ENCODE measurements at regions of chr20 and their contacts with region 1.

Region 1: DNA sequence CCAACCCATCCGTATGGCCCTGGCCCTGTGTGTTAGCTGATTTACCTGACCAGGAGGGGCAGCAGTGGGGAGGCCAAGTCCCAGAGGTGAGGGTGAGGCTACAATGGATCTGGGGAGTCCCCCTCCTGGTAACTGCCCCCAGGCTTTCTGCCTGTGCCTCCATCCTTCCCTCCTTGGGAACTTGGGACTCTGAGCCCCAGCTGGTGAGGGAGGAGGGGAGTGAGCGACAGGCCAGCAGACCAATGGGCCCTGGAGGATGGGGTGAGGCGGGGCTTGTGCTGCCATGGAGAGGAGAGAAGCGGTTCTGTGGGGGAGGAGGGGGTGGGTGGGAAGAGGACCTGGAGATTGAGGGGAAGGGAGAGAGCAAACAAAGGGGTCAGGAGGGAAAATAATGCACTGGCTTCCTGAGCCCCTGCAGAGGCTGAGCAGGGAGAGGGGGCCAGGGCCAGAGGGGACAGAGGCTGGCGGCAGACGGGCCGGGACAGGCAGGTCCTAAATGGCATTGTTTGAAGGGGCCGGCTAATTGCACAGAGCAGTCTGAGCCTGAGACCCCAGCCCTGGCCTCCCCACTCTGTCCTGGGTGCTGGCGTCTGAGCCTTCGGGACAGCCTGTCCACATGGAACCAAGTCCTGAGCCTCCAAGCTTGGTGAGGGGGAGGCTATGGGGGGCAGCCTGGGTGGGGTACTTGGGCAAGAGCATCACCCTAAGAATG is 17.5 kb downstream of the DNMT3B start:
- DNase-seq: no peak
- H3K4me3 ChIP-seq: no peak overlapping the region
- H3K4me3 Mint-ChIP-seq: no peak overlapping the region
- H3K27ac ChIP-seq: no peak overlapping the region
- H3K27ac Mint-ChIP-seq: no peak overlapping the region
- H3K4me1 ChIP-seq: no peaks in the 10 kb centered on the region
- H3K4me1 Mint-ChIP-seq: no peaks in the 10 kb centered on the region
- H3K27me3 ChIP-seq: no peaks in the 10 kb centered on the region
- H3K27me3 Mint-ChIP-seq: peaks cover 0 to 3% of the 10 kb centered on the region in 2 donors

Region 2: GRCh38 chr20:32681175-32682084 is 98.2 kb before region 1 on chr20:
- CTCF ChIA-PET with region 1: interaction called, 225 read pairs
- POLR2A ChIA-PET with region 1: no interaction called
- DNase-seq: no peak
- H3K4me3 ChIP-seq: no peak overlapping the region
- H3K4me3 Mint-ChIP-seq: no peak overlapping the region
- H3K27ac ChIP-seq: peak overlapping the region; percentile 45
- H3K27ac Mint-ChIP-seq: peak overlapping the region in 1 of 8 donors; percentile 90
- H3K4me1 ChIP-seq: peaks cover 6% of the 10 kb centered on the region
- H3K4me1 Mint-ChIP-seq: peaks cover 5 to 10% (median 5%) of the 10 kb centered on the region in 3 donors
- H3K27me3 ChIP-seq: no peaks in the 10 kb centered on the region
- H3K27me3 Mint-ChIP-seq: peaks cover 0 to 1% of the 10 kb centered on the region in 2 donors

Region 3: GRCh38 chr20:32743237-32744112 is 36.2 kb before region 1 on chr20 and contains the start of gene COMMD7:
- CTCF ChIA-PET with region 1: interaction called, 15 read pairs
- POLR2A ChIA-PET with region 1: no interaction called
- DNase-seq: peak; percentile 35 to 70 (median 51)
- H3K4me3 ChIP-seq: peak within 1 kb of the TSS; percentile 62
- H3K4me3 Mint-ChIP-seq: peak within 1 kb of the TSS; percentile 85 to 98 (median 97)
- H3K27ac ChIP-seq: peak within 1 kb of the TSS; percentile 87
- H3K27ac Mint-ChIP-seq: peak within 1 kb of the TSS; percentile 84 to 99 (median 98)
- H3K4me1 ChIP-seq: peaks cover 31% of the 10 kb centered on the region
- H3K4me1 Mint-ChIP-seq: peaks cover 30 to 43% (median 39%) of the 10 kb centered on the region in 3 donors
- H3K27me3 ChIP-seq: no peaks in the 10 kb centered on the region
- H3K27me3 Mint-ChIP-seq: peaks cover 0 to 2% of the 10 kb centered on the region in 2 donors
- total RNA-seq, gene COMMD7: 33.8 to 35.6 TPM

Region 4: DNA sequence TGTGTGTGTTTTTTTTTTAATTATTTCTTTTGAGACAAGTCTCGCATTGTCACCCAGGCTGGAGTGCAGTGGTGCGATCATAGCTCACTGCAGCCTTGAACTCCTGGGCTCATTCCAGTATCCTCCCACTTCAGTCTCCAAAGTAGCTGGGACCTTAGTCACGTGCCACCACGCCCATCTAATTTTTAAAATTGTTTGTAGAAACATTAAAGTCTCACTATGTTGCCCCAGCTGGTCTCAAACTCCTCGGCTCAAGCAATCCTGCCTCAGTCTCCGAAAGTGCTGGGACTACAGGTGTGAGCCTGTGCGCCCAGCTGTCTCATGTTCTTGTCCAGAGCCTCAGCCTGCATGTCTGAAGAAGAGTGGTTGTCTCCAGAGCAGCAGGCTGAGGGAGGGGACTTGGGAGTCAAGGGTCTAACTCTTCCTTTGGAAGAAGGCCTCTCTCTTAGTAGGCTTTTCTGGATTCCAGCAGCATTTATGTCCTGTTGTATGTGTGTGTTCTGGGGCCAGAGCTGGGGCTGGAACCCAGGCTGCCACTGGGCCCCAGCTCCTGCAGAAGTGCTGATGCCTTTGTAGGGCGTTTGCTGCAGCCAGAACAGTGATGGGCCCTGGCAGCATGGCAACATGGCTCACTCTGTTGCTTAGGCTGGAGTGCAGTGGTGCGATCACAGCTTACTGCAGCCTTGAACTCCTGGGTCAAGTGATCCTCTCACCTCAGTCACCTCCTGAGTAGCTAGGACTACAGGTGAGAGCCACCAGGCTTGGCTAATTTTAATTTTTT is 12.0 kb before region 1 on chr20:
- CTCF ChIA-PET with region 1: interaction called, 21 read pairs
- POLR2A ChIA-PET with region 1: interaction called, 3 read pairs
- DNase-seq: no peak
- H3K4me3 ChIP-seq: no peak overlapping the region
- H3K4me3 Mint-ChIP-seq: no peak overlapping the region
- H3K27ac ChIP-seq: no peak overlapping the region
- H3K27ac Mint-ChIP-seq: no peak overlapping the region
- H3K4me1 ChIP-seq: peaks cover 25% of the 10 kb centered on the region
- H3K4me1 Mint-ChIP-seq: peaks cover 8 to 20% (median 13%) of the 10 kb centered on the region in 3 donors
- H3K27me3 ChIP-seq: no peaks in the 10 kb centered on the region
- H3K27me3 Mint-ChIP-seq: no peaks in the 10 kb centered on the region

Region 5: DNA sequence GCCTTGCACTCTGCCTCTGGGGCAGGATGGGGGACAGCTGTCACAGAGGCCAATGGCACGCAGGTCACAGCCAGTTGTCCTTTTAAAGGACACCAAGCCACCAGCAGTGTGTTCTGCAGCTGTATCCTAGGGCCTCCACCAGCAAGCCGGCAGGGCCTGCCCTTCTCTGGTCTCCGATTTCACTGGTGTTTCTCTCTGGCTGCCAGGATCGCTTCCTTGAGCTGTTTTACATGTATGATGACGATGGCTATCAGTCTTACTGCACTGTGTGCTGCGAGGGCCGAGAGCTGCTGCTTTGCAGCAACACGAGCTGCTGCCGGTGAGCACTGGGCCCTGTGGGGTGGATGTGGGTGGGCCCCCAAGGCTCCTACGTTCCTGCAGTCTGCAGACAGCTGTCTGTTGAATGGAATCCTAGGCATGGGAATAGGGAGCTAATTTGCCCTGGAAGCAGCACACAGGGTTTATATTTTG is 17.4 kb after region 1 on chr20:
- CTCF ChIA-PET with region 1: interaction called, 14 read pairs
- POLR2A ChIA-PET with region 1: no interaction called
- DNase-seq: no peak
- H3K4me3 ChIP-seq: no peak overlapping the region
- H3K4me3 Mint-ChIP-seq: no peak overlapping the region
- H3K27ac ChIP-seq: no peak overlapping the region
- H3K27ac Mint-ChIP-seq: peak overlapping the region in 1 of 8 donors; percentile 29
- H3K4me1 ChIP-seq: peaks cover 54% of the 10 kb centered on the region
- H3K4me1 Mint-ChIP-seq: peaks cover 15 to 49% (median 25%) of the 10 kb centered on the region in 3 donors
- H3K27me3 ChIP-seq: no peaks in the 10 kb centered on the region
- H3K27me3 Mint-ChIP-seq: no peaks in the 10 kb centered on the region

Measured in CD8-positive, alpha-beta memory T cell (primary cell).